CD8-positive, alpha-beta T cell (primary cell): ENCODE measurements at regions of chr2 and their contacts with region 1.

Region 1: DNA sequence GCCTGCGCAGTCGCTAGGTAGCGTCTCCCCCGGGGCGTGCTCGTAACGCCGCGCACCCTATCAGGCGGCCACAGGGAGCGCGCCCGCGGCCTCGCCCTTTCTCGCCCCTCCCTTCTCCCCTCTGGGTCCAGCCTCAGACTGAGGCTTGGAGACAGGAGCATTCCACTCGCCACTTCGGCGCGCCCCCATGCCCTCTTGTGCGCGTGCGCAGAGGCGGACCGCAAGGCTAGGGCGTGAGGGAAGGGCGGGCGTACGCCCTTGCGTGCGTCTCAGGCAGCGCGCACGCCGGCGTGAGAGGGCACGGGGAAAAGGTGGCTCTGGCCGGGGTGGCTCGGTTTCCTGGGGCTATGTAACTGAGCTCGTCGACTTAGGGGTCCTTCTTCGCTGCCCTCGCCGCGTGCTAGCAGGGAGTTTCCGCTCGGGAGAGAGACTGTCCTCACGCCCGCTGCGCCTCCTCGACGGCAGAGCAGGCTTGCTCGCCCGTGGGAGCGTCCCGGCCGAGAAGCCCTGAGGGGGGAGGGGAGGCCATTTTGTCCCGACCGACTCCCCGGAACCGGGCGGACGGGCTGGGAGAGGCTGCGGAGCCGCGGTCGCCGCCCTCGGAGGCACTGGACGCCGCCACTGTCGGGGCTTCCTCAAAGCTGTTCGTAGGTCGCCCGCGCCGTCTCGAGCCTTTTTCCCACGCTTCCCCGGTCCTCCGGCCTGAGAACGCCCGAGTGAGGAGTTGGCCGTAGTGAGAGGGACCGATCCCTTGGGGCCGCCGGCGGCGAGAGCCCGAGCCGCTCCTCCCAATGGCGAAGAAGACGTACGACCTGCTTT is at the start of gene RAB10:
- DNase-seq: peak; percentile 98 to 100 (median 99)
- ATAC-seq: peak; percentile 89
- H3K4me3 ChIP-seq: peak within 1 kb of the TSS; percentile 82 to 99
- H3K4me3 Mint-ChIP-seq: peak within 1 kb of the TSS; percentile 95
- H3K27ac ChIP-seq: peak within 1 kb of the TSS; percentile 92 to 93
- H3K27ac Mint-ChIP-seq: peak within 1 kb of the TSS; percentile 98
- H3K4me1 ChIP-seq: peaks cover 29% of the 10 kb centered on the region
- H3K4me1 Mint-ChIP-seq: peaks cover 40% of the 10 kb centered on the region
- H3K27me3 ChIP-seq: no peaks in the 10 kb centered on the region
- H3K27me3 Mint-ChIP-seq: no peaks in the 10 kb centered on the region
- CTCF ChIP-seq: no peak
- total RNA-seq, gene RAB10: 12.7 TPM

Region 2: DNA sequence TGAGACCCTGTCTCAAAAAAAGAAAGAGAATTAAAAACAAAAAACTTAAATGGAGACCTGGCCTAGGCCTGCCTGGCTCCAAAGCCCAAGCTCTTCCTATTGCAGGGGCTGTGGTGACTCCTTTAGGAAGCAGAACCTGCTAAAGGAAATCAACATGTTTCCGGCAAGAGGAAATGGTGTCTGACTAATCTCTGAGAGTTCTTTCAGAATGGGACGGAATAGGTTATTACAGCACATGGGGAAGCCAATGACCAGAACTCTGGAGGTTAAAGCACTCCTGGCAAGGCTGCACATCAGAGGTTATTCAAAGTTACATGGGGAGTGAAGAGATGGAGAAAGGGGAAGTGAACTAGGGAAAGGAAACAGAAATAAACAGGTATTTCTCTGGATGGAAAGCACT is 73.1 kb before region 1 on chr2:
- CTCF ChIA-PET with region 1: no interaction called
- POLR2A ChIA-PET with region 1: no interaction called
- intact Hi-C with region 1: no loop called
- DNase-seq: no peak
- ATAC-seq: no peak
- H3K4me3 ChIP-seq: no peak overlapping the region
- H3K4me3 Mint-ChIP-seq: no peak overlapping the region
- H3K27ac ChIP-seq: no peak overlapping the region
- H3K27ac Mint-ChIP-seq: no peak overlapping the region
- H3K4me1 ChIP-seq: peaks cover 5% of the 10 kb centered on the region
- H3K4me1 Mint-ChIP-seq: peaks cover 8% of the 10 kb centered on the region
- H3K27me3 ChIP-seq: no peaks in the 10 kb centered on the region
- H3K27me3 Mint-ChIP-seq: no peaks in the 10 kb centered on the region
- CTCF ChIP-seq: no peak

Region 3: DNA sequence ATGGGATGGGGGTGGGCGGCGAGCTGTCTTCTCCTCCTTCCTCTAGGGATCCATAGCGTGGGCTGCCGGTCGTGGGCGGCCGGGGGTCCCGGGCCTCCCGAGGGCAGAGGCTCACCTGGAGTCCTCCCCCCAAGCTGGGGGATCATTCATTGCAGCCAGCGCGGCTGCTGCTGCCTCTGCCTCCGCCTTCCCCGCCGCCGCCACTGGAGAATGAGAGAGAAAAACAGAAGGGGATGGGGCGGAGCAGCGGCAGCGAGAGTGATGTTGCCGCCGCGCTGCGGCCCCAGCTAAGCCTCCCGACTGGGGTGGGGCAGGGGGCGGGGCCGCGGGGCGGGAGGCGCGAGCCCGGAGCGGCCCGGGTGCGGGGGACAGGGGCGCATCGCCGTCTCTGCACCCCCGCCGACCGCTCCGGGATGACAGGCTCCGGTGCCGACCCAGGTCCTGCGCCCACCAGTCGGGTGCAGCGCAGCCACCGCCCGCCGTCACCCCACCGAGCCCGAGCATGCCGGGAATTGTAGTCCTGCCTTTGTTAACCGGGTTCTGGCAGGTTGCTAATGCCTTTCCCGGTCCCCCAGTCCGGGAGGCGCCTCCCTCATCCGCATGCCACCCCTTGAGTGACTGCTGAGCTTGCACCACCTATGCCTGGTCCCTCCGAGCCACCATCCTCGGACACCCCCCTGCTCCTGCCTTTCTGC is 51.6 kb before region 1 on chr2 and contains the start of gene KIF3C:
- CTCF ChIA-PET with region 1: no interaction called
- POLR2A ChIA-PET with region 1: interaction called, 6 read pairs
- intact Hi-C with region 1: loop called (anchors 1 to 2 kb)
- DNase-seq: peak; percentile 46 to 84 (median 76)
- ATAC-seq: peak; percentile 92
- H3K4me3 ChIP-seq: peak within 1 kb of the TSS; percentile 61 to 81
- H3K4me3 Mint-ChIP-seq: peak within 1 kb of the TSS; percentile 88
- H3K27ac ChIP-seq: peak within 1 kb of the TSS; percentile 26 to 28
- H3K27ac Mint-ChIP-seq: peak within 1 kb of the TSS; percentile 79
- H3K4me1 ChIP-seq: peaks cover 11% of the 10 kb centered on the region
- H3K4me1 Mint-ChIP-seq: peaks cover 17% of the 10 kb centered on the region
- H3K27me3 ChIP-seq: no peaks in the 10 kb centered on the region
- H3K27me3 Mint-ChIP-seq: no peaks in the 10 kb centered on the region
- CTCF ChIP-seq: no peak
- total RNA-seq, gene KIF3C: 1.5 to 2.3 TPM

Region 4: DNA sequence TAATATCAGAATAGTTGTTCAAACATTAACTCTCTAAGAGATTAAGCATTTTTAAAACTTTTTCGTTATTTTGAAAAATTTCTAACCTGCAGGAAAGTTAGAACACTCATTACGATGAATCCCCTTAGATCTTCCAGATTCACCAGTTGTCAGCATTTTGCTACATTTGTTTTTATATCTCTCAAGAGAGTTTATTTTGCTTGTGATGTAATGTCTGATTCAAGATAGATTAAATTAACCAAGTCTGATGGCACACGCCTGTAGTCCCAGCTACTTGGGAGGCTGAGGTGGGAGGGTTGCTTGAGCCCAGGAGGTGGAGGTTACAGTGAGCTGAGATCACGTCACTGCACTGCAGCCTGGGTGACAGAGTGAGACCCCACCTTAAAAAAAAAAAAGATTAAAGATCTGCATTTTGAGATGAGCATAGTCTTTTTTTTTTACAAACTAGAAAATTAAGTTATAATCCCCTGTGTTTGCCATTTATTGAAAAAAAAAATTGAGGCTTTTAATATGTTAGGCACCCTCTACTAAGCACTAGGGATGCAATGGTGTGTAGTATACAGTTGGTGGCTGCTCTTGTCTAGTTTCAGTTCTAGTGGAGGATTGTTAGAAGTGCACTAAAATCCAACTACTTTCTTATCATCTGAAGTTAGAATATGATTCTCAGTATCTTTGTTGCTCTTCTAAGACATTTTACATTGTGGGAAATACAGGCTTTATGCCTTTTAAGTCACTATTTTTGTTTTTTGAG is 20.7 kb after region 1 on chr2:
- CTCF ChIA-PET with region 1: no interaction called
- POLR2A ChIA-PET with region 1: no interaction called
- intact Hi-C with region 1: no loop called
- DNase-seq: no peak
- ATAC-seq: peak; percentile 34
- H3K4me3 ChIP-seq: no peak overlapping the region
- H3K4me3 Mint-ChIP-seq: no peak overlapping the region
- H3K27ac ChIP-seq: no peak overlapping the region
- H3K27ac Mint-ChIP-seq: peak overlapping the region; percentile 41
- H3K4me1 ChIP-seq: peaks cover 20% of the 10 kb centered on the region
- H3K4me1 Mint-ChIP-seq: peaks cover 71% of the 10 kb centered on the region
- H3K27me3 ChIP-seq: no peaks in the 10 kb centered on the region
- H3K27me3 Mint-ChIP-seq: no peaks in the 10 kb centered on the region
- CTCF ChIP-seq: no peak

Region 5: DNA sequence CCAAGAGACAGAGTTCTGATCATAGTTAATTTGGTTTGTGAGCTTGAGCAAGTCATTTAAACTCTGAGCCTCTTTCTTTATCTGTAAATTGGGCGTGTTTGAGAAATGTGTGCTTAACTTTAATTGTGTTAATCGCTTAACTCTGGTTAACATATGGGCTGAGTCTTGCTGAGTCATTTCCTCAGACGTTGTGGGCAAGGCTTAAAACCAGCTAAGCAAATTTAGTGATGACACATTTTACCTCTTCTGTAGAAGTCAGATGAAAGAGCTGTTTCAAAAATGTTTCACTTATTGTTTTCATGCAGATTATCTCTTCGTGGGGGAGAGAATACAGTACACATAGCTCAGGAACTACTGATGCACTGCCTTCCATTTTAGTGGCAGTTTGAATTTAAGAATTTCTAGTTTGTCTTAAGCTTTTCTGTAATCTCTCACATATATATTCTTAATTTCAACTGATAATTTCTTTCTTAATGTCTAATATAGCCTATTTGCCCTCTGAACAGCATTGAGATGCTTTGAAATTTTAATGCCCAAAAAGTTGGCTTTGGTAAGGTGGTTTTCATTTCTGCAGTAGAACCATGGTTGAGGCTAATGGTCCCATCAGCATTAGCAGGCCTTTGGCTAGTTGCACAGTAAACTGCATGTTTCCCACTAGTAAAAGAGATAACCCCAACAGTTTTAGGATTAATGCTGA is 34.7 kb after region 1 on chr2:
- CTCF ChIA-PET with region 1: interaction called, 3 read pairs
- POLR2A ChIA-PET with region 1: interaction called, 3 read pairs
- intact Hi-C with region 1: loop called (anchors 1 to 2 kb)
- DNase-seq: peak in 8 of 9 experiments; percentile 12 to 70 (median 48)
- ATAC-seq: peak; percentile 94
- H3K4me3 ChIP-seq: no peak overlapping the region
- H3K4me3 Mint-ChIP-seq: no peak overlapping the region
- H3K27ac ChIP-seq: peak overlapping the region in 1 of 2 experiments; percentile 26
- H3K27ac Mint-ChIP-seq: peak overlapping the region; percentile 12
- H3K4me1 ChIP-seq: peaks cover 18% of the 10 kb centered on the region
- H3K4me1 Mint-ChIP-seq: peaks cover 46% of the 10 kb centered on the region
- H3K27me3 ChIP-seq: no peaks in the 10 kb centered on the region
- H3K27me3 Mint-ChIP-seq: no peaks in the 10 kb centered on the region
- CTCF ChIP-seq: no peak

Region 6: GRCh38 chr2:26172189-26172870 is 138.3 kb after region 1 on chr2:
- CTCF ChIA-PET with region 1: no interaction called
- POLR2A ChIA-PET with region 1: no interaction called
- intact Hi-C with region 1: no loop called
- DNase-seq: no peak
- ATAC-seq: peak; percentile 19
- H3K4me3 ChIP-seq: peak overlapping the region in 1 of 2 experiments; percentile 37
- H3K4me3 Mint-ChIP-seq: peak overlapping the region; percentile 78
- H3K27ac ChIP-seq: no peak overlapping the region
- H3K27ac Mint-ChIP-seq: no peak overlapping the region
- H3K4me1 ChIP-seq: peaks cover 5% of the 10 kb centered on the region
- H3K4me1 Mint-ChIP-seq: peaks cover 11% of the 10 kb centered on the region
- H3K27me3 ChIP-seq: peaks cover 6 to 18% of the 10 kb centered on the region in 2 experiments
- H3K27me3 Mint-ChIP-seq: peaks cover 26% of the 10 kb centered on the region
- CTCF ChIP-seq: no peak

Region 7: GRCh38 chr2:26244309-26245121 is 210.5 kb after region 1 on chr2 and contains the starts of genes HADHA and HADHB:
- CTCF ChIA-PET with region 1: no interaction called
- POLR2A ChIA-PET with region 1: no interaction called
- intact Hi-C with region 1: loop called (anchors 2 kb)
- DNase-seq: peak; percentile 72 to 91 (median 84)
- ATAC-seq: peak; percentile 82
- H3K4me3 ChIP-seq: peak within 1 kb of the TSS; percentile 99
- H3K4me3 Mint-ChIP-seq: peak within 1 kb of the TSS; percentile 99
- H3K27ac ChIP-seq: peak within 1 kb of the TSS; percentile 99
- H3K27ac Mint-ChIP-seq: peak within 1 kb of the TSS; percentile 100
- H3K4me1 ChIP-seq: peaks cover 22% of the 10 kb centered on the region
- H3K4me1 Mint-ChIP-seq: peaks cover 60% of the 10 kb centered on the region
- H3K27me3 ChIP-seq: no peaks in the 10 kb centered on the region
- H3K27me3 Mint-ChIP-seq: no peaks in the 10 kb centered on the region
- CTCF ChIP-seq: no peak
- total RNA-seq, gene HADHA: 66.8 to 69.4 TPM
- total RNA-seq, gene HADHB: 26.0 to 26.1 TPM